ENCODE measurements at regions of chr18 and their contacts with region 1.

Region 1: DNA sequence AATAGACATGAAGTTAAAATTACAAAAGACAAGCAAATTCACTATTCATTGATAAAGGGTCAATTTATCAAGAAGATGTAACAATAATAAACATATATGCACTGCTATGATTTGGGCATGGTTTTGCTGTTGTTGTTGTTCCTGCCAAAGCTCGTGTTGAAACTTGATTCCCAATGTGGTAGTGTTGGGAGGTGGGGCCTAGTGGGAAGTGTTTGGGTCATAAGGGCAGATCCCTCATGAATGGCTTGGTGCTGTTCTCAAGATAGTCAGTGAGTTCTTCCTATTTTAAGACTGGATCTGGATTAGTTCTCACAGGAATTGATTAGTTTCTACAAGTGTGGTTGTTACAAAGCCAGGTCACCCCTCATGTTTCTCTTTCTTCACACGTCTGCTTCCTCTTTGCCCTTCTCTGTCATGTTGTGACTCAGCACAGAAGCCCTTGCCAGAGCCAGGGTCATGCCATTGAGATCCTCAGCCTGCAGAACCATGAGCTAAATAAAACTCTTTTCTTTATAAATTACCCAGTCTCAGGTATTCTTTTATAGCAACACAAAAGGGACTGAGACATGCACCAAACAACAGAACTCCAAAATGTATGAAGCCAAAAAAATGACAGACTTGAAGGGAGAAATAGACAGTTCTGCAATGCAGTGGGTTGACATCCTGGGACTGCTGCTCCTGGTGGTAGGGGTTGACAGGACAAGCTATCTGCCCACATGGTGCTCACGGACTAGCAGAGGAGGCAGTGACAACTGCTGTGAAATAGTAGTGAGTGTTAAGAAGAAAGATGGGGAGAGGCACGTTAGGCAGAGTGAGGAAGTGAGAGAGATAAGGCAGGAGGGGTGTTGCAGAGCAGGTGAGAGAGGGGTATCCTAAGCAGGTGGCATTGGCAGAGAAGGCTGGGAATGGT is 18.6 kb upstream of the SKA1 start:
- DNase-seq: no peak
- ATAC-seq: no peak
- H3K4me3 ChIP-seq: no peak overlapping the region
- H3K27ac ChIP-seq: no peak overlapping the region
- H3K4me1 ChIP-seq: peaks cover 0 to 4% of the 10 kb centered on the region in 2 donors
- H3K27me3 ChIP-seq: no peaks in the 10 kb centered on the region
- CTCF ChIP-seq: no peak
- POLR2A ChIP-seq: no peak

Region 2: GRCh38 chr18:50218432-50219197 is 137.7 kb before region 1 on chr18:
- in situ Hi-C with region 1: no loop called
- intact Hi-C with region 1: loop called (anchors 5 kb)
- DNase-seq: no peak
- ATAC-seq: no peak
- H3K4me3 ChIP-seq: no peak overlapping the region
- H3K27ac ChIP-seq: no peak overlapping the region
- H3K4me1 ChIP-seq: no peaks in the 10 kb centered on the region
- H3K27me3 ChIP-seq: no peaks in the 10 kb centered on the region
- CTCF ChIP-seq: no peak
- POLR2A ChIP-seq: no peak

Region 3: GRCh38 chr18:50649821-50650220 is 293.5 kb after region 1 on chr18:
- in situ Hi-C with region 1: no loop called
- intact Hi-C with region 1: no loop called
- DNase-seq: peak in 1 of 2 donors; percentile 31
- ATAC-seq: peak in 1 of 2 donors; percentile 21
- H3K4me3 ChIP-seq: no peak overlapping the region
- H3K27ac ChIP-seq: no peak overlapping the region
- H3K4me1 ChIP-seq: peaks cover 15 to 16% of the 10 kb centered on the region in 2 donors
- H3K27me3 ChIP-seq: no peaks in the 10 kb centered on the region
- CTCF ChIP-seq: no peak
- POLR2A ChIP-seq: no peak